ENCODE measurements at regions of chr7 and their contacts with region 1.

Region 1: DNA sequence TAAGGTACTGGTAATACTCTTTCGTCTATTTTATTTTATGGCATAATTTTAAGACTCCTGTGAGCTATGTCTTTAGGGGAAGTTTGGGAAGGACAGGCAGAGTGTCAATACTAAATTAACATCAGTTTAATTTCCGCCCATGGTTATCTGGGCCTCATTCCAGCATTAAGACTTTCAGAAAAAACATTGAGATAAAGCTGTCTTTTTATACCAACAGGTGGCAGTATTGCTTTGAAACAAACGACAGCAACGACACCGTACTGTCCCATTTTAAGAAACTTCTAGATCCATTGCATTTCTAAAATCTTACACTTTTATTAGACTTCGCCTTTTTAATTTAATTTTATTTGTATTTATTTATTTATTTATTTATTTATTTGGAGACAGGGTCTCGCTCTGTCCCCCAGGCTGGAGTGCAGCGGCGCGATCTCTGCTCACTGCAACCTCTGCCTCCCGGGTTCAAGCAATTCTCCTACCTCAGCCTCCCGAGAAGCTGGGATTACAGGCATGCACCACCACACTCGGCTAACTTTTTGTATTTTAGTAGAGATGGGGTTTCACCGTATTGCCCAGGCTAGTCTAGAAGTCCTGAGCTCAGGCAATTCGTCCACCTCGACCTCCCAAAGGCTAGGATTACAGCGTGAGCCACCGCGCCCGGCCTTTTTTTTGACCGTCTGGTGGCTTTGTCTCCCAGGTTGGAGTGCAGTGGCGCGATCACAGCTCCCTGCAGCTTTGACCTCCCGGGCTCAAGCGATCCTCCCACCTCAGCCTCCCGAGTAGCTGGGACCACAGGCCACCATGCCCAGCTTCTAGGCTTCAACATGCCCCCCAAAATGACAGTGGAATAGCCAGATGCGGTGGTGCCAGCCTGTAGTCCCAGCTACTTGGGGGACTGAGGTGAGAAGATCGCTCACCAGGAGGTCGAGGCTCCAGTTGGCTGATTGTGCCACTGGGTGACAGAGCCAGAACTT is 78.7 kb upstream of the C1GALT1 start:
- DNase-seq: peak; percentile 81
- ATAC-seq: peak; percentile 58
- H3K4me3 ChIP-seq: peak overlapping the region; percentile 49
- H3K27ac ChIP-seq: no peak overlapping the region
- H3K4me1 ChIP-seq: peaks cover 17% of the 10 kb centered on the region
- H3K27me3 ChIP-seq: no peaks in the 10 kb centered on the region
- CTCF ChIP-seq: peak; percentile 68

Region 2: GRCh38 chr7:7176421-7177043 is 72.9 kb after region 1 on chr7:
- CTCF ChIA-PET with region 1: interaction called, 23 read pairs
- POLR2A ChIA-PET with region 1: interaction called, 3 read pairs
- intact Hi-C with region 1: loop called (anchors 1 kb)
- DNase-seq: peak; percentile 84
- ATAC-seq: peak; percentile 68
- H3K4me3 ChIP-seq: peak overlapping the region; percentile 52
- H3K27ac ChIP-seq: peak overlapping the region; percentile 91
- H3K4me1 ChIP-seq: peaks cover 40% of the 10 kb centered on the region
- H3K27me3 ChIP-seq: no peaks in the 10 kb centered on the region
- CTCF ChIP-seq: no peak

Region 3: DNA sequence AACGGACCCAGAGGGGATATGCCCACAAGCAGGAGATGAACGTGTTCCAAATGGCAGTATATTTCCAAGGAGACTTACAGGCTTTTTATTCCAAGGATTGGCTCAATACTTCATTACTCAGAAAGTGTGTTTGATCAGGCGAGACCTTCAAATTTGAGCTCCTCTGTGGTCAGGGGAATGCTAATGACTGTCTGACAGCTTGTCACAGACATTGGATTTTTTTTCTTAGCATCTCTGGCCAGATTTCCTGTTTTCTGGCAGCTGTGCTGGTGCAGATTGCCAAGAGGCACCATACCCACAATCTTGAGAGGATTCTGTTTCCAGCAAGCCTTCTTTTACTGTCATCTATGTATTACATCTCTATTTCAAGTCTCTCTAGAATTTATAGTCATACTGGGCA is 172.5 kb after region 1 on chr7:
- CTCF ChIA-PET with region 1: no interaction called
- POLR2A ChIA-PET with region 1: interaction called, 10 read pairs
- intact Hi-C with region 1: no loop called
- DNase-seq: no peak
- ATAC-seq: no peak
- H3K4me3 ChIP-seq: no peak overlapping the region
- H3K27ac ChIP-seq: no peak overlapping the region
- H3K4me1 ChIP-seq: no peaks in the 10 kb centered on the region
- H3K27me3 ChIP-seq: no peaks in the 10 kb centered on the region
- CTCF ChIP-seq: no peak

Region 4: DNA sequence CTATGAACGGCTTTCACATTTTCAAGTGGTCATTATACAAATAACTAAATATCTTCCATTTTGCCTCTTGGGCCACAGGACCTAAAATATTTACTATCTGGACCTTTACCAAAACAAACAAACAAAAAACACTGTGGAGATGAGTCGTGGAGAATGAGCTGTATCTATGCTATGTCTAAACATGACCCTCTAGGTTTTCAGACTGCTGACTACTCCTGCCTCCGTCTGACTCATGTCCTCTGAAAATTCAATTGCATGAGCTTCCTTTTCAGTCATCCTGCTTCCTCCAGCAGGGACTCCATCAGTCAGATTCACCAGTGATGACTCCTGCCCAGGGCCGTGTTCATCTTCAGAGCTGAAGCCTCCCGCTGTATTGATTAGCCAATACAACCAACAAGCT is 335.2 kb after region 1 on chr7:
- CTCF ChIA-PET with region 1: interaction called, 5 read pairs
- POLR2A ChIA-PET with region 1: no interaction called
- intact Hi-C with region 1: loop called (anchors 5 kb)
- DNase-seq: peak; percentile 97
- ATAC-seq: peak; percentile 99
- H3K4me3 ChIP-seq: no peak overlapping the region
- H3K27ac ChIP-seq: peak overlapping the region; percentile 74
- H3K4me1 ChIP-seq: peaks cover 38% of the 10 kb centered on the region
- H3K27me3 ChIP-seq: no peaks in the 10 kb centered on the region
- CTCF ChIP-seq: no peak

Region 5: DNA sequence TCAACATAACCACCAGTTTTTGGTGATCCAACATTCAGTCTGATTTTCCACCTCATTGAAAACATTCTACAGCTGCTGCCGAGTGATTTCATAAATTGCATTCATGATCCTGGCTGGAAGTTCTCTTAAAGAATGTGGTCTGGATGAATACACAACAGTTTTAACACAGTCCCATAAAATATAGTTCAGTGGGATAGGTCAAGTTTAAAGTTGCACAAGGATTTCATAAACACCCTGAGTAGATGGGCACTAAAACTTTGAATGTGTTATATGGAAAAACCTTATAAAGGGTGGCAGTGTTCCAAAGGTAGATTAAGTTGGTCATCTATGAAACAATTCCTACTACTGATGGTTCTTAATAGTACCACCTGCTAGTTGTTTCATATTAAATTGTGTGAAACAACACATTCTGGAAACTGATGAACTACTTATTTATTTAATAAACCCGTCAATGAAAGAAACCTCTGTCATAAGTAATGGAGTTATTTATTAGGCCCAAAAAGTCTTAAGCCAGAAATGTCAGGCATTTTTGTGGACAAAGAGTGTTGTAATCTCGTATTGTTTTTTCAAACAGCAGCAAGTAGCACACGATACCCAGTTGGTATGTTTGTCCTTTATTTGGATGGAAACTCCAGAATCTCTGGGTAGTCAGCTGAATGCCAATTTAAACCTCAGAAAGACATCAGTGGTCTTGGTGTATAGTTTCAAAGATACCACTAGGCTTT is 629.1 kb after region 1 on chr7:
- CTCF ChIA-PET with region 1: no interaction called
- POLR2A ChIA-PET with region 1: no interaction called
- intact Hi-C with region 1: no loop called
- DNase-seq: peak; percentile 42
- ATAC-seq: peak; percentile 64
- H3K4me3 ChIP-seq: no peak overlapping the region
- H3K27ac ChIP-seq: no peak overlapping the region
- H3K4me1 ChIP-seq: peaks cover 14% of the 10 kb centered on the region
- H3K27me3 ChIP-seq: no peaks in the 10 kb centered on the region
- CTCF ChIP-seq: no peak